Left cardiac atrium (tissue), 4 donors: ENCODE measurements at regions of chr13 and their contacts with region 1.

Region 1: DNA sequence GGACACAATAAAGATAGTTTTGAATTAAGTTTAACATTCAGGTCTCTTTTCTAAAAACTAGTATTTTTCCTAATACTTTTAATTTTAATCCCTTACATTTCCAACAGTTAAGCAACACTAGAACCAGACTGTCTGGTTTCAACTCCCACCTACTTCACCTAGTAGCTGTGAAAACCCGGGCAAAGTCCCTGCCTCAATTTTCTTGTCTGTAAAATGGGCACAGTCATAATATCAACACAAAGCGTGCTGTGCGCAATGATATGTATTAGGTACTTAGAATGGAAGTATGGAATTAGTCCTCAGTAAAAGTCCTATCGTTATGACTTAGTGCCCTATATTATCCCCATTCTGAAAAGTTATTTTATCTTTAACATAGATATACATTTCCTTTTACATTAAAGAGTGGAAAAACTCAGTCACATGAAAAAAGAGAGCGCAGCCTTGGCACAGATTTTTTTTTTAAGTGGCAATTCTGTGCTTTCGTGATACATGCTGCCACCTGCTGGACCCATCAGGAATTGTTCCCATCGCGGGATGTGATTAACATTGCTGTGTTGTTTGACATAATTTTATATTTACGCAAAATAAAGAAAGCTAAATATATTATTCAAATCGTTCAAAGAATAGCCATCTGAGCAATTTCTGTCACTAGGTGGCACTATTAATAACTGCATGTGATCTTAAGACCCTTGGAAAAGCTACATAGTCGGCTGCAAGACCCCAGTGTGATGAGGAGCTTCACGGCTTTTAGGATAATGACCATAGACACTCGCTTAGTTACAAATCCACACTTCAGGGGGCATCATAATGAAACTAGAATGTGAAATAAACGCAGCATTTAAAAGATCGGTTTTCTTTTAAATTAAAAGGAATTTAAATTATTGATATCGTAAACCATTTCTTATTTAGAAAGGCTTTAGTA is 59.9 kb downstream of the LIG4 start:
- DNase-seq: peak; percentile 38
- ATAC-seq: peak in 1 of 2 donors; percentile 54

Region 2: GRCh38 chr13:107373551-107373950 is 781.9 kb before region 1 on chr13:
- intact Hi-C with region 1: loop called in 1 of 2 experiments (anchors 10 kb)
- DNase-seq: no peak
- ATAC-seq: peak in 1 of 2 donors; percentile 55